ENCODE measurements at regions of chr1 and their contacts with region 1.

Region 1: DNA sequence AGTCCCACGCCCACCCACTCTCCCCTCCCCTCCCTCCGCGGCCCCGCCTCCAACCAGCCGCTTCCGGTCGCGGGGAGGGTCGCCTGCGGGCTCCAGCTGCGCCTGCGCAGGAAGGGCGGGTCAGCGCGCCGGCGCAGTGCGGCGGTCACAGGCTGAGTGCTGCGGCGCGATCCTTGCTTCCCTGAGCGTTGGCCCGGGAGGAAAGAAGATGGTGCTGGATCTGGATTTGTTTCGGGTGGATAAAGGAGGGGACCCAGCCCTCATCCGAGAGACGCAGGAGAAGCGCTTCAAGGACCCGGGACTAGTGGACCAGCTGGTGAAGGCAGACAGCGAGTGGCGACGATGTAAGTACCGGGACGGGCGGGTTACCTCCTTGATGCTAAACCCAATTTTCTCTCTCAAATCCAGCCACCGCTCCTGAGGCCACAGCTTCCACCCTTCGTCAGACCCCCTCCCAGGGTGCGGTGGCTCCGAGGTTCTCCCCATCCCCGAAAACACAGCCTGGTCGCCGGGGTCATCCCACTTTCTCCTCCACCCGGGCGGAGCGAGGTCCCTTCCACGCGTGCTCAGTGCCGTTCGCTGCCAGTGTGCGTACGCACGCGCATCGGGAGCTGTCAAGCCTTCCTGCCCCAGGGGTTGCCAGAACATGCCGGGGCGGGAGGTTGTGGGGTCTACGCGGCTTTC is at the start of gene SARS1:
- DNase-seq: peak; percentile 92
- H3K4me3 Mint-ChIP-seq: peak within 1 kb of the TSS; percentile 98
- H3K27ac Mint-ChIP-seq: peak within 1 kb of the TSS; percentile 97
- H3K4me1 Mint-ChIP-seq: peaks cover 31% of the 10 kb centered on the region
- H3K27me3 Mint-ChIP-seq: no peaks in the 10 kb centered on the region
- total RNA-seq, gene SARS1: 245 to 251 TPM

Region 2: GRCh38 chr1:109099938-109100773 is 113.8 kb before region 1 on chr1:
- CTCF ChIA-PET with region 1: interaction called, 5 read pairs
- POLR2A ChIA-PET with region 1: interaction called, 14 read pairs
- intact Hi-C with region 1: loop called (anchors 1 kb)
- DNase-seq: peak; percentile 98
- H3K4me3 Mint-ChIP-seq: peak overlapping the region; percentile 98
- H3K27ac Mint-ChIP-seq: peak overlapping the region; percentile 99
- H3K4me1 Mint-ChIP-seq: peaks cover 14% of the 10 kb centered on the region
- H3K27me3 Mint-ChIP-seq: peaks cover 3% of the 10 kb centered on the region

Region 3: GRCh38 chr1:109201123-109201703 is 12.7 kb before region 1 on chr1:
- CTCF ChIA-PET with region 1: interaction called, 68 read pairs
- POLR2A ChIA-PET with region 1: interaction called, 8 read pairs
- intact Hi-C with region 1: loop called (anchors 1 kb)
- DNase-seq: peak; percentile 88
- H3K4me3 Mint-ChIP-seq: no peak overlapping the region
- H3K27ac Mint-ChIP-seq: no peak overlapping the region
- H3K4me1 Mint-ChIP-seq: peaks cover 22% of the 10 kb centered on the region
- H3K27me3 Mint-ChIP-seq: no peaks in the 10 kb centered on the region

Region 4: GRCh38 chr1:109226078-109226445 is 12.1 kb after region 1 on chr1:
- CTCF ChIA-PET with region 1: interaction called, 5 read pairs
- POLR2A ChIA-PET with region 1: interaction called, 12 read pairs
- intact Hi-C with region 1: no loop called
- DNase-seq: no peak
- H3K4me3 Mint-ChIP-seq: no peak overlapping the region
- H3K27ac Mint-ChIP-seq: no peak overlapping the region
- H3K4me1 Mint-ChIP-seq: peaks cover 25% of the 10 kb centered on the region
- H3K27me3 Mint-ChIP-seq: no peaks in the 10 kb centered on the region

Region 5: GRCh38 chr1:109248797-109249642 is 35.1 kb after region 1 on chr1 and contains the start of gene CELSR2:
- CTCF ChIA-PET with region 1: interaction called, 4 read pairs
- POLR2A ChIA-PET with region 1: no interaction called
- intact Hi-C with region 1: loop called (anchors 1 kb)
- DNase-seq: peak; percentile 66
- H3K4me3 Mint-ChIP-seq: peak within 1 kb of the TSS; percentile 59
- H3K27ac Mint-ChIP-seq: no peak within 1 kb of the TSS
- H3K4me1 Mint-ChIP-seq: peaks cover 5% of the 10 kb centered on the region
- H3K27me3 Mint-ChIP-seq: peaks cover 8% of the 10 kb centered on the region
- total RNA-seq, gene CELSR2: 1.0 to 1.3 TPM